ENCODE measurements at regions of chr6 and their contacts with region 1.

Region 1: DNA sequence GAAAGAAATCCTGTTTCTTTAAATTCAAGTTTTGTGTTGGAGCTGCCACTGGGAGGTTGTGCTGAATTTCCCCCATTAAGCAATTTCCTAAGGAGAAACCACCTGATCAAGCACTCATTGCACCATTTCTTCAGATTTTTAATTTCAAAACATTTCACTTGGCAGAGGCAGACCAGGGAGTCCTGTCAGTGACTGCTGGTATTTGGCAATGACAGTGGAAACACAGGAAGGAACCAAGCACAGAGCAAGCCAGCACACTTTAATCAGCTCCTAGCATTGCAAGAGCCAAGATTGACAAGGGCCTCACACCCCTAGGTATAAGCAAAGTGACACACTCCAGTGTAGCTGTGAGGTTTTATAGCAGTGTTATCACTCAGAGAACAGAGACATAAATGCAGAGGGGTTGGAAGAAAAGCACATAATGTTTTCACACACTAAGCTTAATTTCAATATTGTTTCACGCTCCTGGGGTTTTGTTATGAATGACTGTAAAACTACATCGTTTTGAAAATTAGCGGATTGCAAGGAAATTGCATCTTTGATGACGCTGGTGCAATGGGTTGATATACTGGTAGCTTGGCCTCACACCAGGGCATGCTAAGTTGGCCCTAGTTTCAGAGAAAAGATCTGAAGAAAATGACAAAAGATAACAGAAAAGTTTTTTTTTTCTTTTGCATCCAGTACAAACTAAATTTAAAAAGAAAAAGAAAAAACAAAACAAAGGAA is 768.4 kb downstream of the TFAP2A start:
- DNase-seq: peak; percentile 92
- H3K4me3 Mint-ChIP-seq: no peak overlapping the region
- H3K27ac Mint-ChIP-seq: peak overlapping the region; percentile 32
- H3K4me1 Mint-ChIP-seq: peaks cover 23% of the 10 kb centered on the region
- H3K27me3 Mint-ChIP-seq: no peaks in the 10 kb centered on the region
- CTCF ChIP-seq: no peak

Region 2: DNA sequence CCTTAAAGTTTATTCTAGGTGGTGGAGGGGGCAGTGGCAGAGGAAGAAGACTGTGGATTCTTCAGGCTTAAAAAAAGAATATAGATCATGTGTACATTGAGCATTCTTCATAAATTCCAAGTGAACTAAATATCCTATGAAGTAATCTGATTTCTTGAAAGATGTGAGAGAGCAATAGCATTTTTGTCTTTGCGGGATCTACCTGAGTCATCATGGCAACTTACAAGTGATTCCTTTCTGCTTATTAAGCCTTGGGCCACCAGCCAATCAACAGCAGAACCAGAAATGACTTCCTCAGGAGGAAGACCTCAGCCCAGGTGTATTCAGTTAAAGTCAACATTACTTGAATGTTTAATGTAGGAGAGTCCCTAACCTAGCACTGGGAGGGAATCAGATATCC is 11.5 kb after region 1 on chr6:
- CTCF ChIA-PET with region 1: no interaction called
- POLR2A ChIA-PET with region 1: interaction called, 13 read pairs
- intact Hi-C with region 1: no loop called
- DNase-seq: peak; percentile 50
- H3K4me3 Mint-ChIP-seq: no peak overlapping the region
- H3K27ac Mint-ChIP-seq: peak overlapping the region; percentile 17
- H3K4me1 Mint-ChIP-seq: peaks cover 8% of the 10 kb centered on the region
- H3K27me3 Mint-ChIP-seq: no peaks in the 10 kb centered on the region
- CTCF ChIP-seq: no peak